ENCODE measurements at regions of chr4 and their contacts with region 1.

Region 1: DNA sequence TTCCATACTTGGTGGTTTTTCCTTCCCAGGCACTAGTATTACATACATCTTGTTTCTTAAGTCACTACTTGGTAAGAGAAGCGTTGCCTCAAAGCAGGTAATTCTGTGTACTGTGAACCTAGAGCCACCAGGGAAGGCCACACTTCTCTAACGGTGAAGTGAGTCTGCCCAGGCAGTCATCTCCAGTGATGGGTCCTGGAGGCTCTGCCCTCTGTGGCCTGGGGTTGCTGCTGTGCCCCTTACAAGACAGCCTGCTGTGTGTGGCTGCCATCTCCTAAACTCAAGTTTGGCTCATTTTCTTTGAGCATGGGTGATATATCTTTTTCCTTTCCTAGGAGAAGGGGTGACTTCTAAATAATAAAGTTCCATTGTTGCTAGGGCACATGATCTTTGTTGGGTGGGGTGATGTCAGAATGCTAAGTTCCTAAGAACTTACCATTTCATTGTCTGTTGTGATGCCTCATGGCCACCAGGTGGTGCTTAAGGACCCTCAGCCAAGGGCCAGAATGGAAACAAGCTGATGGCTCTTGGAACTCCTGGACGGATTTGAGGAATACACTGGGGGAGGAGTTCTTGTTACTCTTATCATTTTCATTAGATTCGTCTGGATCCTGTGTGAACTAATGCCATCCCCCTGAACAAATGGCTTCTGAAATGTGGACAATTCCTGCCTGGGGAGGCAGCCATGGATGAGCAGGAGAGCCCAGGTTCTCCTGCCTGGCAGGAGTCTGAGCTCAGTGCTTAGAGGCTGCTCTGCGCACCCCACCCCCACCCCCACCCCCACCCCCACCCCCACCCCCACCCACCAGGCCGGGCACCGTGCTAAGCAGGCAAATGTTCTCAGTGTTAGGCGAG is 41.1 kb upstream of the WDR1 start:
- DNase-seq: peak; percentile 74
- H3K4me3 ChIP-seq: no peak overlapping the region
- H3K27ac ChIP-seq: no peak overlapping the region
- H3K4me1 ChIP-seq: no peaks in the 10 kb centered on the region
- H3K27me3 ChIP-seq: peaks cover 2 to 7% of the 10 kb centered on the region in 2 experiments
- CTCF ChIP-seq: peak; percentile 79 to 82
- POLR2A ChIP-seq: no peak

Region 2: DNA sequence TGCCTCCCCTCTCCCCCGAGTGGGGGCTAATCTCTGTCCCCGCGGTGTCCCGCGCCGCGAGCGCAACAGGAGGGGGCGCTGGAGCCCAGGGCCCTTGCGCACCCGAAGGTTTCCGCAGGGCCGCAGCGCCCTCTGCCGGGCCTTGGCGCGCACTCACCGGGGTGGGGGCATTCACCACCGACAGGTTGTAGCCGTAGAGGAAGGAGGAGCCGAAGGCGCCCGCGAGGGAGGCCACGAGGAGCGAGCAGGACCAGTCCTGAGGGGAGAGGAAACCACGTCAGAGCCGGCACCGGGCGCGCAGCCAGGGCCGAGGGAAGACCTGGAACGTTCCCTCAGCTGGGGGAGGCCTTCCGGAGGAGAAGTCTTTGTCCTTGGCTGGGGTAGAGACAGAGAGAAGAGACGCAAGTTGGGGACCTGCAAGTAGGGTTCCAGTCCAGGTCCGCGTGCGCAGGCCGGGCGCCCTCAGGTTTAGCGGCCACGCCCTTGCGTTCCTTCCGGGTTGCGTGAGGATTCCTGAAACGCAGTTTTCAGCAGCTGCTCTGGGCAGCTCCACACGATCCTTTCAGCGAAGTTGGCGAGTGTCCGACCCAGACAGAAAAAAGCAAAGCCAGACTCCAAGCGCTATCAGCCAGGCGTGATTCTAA is 138.8 kb before region 1 on chr4:
- CTCF ChIA-PET with region 1: no interaction called
- POLR2A ChIA-PET with region 1: no interaction called
- dilution Hi-C with region 1: no loop called
- intact Hi-C with region 1: loop called (anchors 5 kb)
- DNase-seq: peak; percentile 95
- H3K4me3 ChIP-seq: peak overlapping the region in 2 of 3 experiments; percentile 25 to 27
- H3K27ac ChIP-seq: peak overlapping the region; percentile 50
- H3K4me1 ChIP-seq: peaks cover 6% of the 10 kb centered on the region
- H3K27me3 ChIP-seq: no peaks in the 10 kb centered on the region
- CTCF ChIP-seq: peak; percentile 100
- POLR2A ChIP-seq: peak; percentile 75

Region 3: DNA sequence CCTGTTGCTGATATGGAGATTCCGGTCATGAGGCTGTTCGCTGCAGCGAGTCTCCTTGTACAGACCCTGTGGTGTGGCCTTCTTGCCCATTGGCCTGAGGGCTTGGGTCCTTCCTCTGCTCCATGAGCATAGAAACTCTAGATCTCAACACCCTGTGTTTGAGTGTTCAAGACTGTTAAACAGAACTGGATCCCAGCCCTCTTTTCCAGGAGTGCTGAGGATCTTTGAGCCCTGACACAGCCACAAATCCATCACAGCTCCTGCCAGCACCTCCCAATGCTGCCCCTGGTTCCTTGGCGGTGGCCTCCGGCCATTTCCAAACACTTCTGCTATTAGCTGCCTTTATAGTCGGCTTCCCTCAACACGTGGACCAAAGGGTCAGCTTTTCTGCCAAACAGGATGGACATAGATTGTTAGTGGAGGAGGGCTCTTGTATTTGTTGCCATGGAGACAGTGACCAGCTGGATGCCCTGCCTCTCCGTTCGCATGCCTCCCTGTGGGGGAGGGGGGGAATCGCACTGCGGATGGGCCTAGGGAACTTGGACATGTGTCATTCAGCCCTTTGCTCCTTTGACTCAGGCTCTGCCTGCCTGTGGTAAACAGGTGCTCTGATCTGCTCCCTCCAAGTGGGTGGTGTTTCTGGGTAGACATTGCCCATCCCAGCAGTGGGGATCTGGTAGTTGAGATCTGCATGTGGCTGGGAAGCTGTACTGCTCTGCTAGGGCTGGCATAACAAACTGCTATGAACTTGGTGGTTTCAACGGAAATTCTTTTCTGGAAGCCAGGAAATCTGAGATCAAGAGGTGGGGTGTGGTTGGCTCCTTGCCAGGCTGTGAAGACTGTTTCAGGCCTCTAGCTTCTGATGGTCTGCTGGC is 34.2 kb before region 1 on chr4:
- CTCF ChIA-PET with region 1: interaction called, 13 read pairs
- POLR2A ChIA-PET with region 1: interaction called, 17 read pairs
- dilution Hi-C with region 1: no loop called
- intact Hi-C with region 1: loop called (anchors 5 kb)
- DNase-seq: peak; percentile 94
- H3K4me3 ChIP-seq: no peak overlapping the region
- H3K27ac ChIP-seq: peak overlapping the region; percentile 66
- H3K4me1 ChIP-seq: peaks cover 22% of the 10 kb centered on the region
- H3K27me3 ChIP-seq: no peaks in the 10 kb centered on the region
- CTCF ChIP-seq: no peak
- POLR2A ChIP-seq: no peak

Region 4: GRCh38 chr4:10173037-10173753 is 15.5 kb after region 1 on chr4:
- CTCF ChIA-PET with region 1: interaction called, 33 read pairs
- POLR2A ChIA-PET with region 1: no interaction called
- dilution Hi-C with region 1: no loop called
- intact Hi-C with region 1: no loop called
- DNase-seq: peak; percentile 70
- H3K4me3 ChIP-seq: no peak overlapping the region
- H3K27ac ChIP-seq: peak overlapping the region; percentile 6
- H3K4me1 ChIP-seq: peaks cover 15% of the 10 kb centered on the region
- H3K27me3 ChIP-seq: no peaks in the 10 kb centered on the region
- CTCF ChIP-seq: peak in 1 of 2 donors; percentile 28
- POLR2A ChIP-seq: no peak

Region 5: DNA sequence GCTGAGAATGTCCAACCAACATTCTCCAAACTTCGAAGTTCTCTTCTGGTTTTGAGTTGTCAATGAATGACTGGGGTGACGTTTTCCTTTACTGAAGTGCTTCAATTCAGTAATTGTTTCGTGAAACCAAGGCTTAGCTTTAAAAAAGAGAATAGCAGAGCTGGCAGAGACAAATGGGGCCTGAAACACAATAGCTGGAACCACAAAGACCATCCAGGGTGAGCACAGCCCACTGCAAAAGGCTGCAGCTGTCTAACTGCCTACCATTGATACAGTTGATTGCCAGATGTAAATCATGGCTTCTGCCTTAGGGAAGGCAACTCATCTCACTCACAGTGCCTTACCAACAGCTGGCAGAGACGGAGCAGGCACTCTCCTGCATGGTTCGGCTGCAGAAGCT is 378.2 kb after region 1 on chr4:
- CTCF ChIA-PET with region 1: interaction called, 88 read pairs
- POLR2A ChIA-PET with region 1: no interaction called
- dilution Hi-C with region 1: loop called (anchors 25 kb)
- intact Hi-C with region 1: loop called (anchors 1 kb)
- DNase-seq: no peak
- H3K4me3 ChIP-seq: no peak overlapping the region
- H3K27ac ChIP-seq: no peak overlapping the region
- H3K4me1 ChIP-seq: peaks cover 3% of the 10 kb centered on the region
- H3K27me3 ChIP-seq: peaks cover 0 to 2% of the 10 kb centered on the region in 2 experiments
- CTCF ChIP-seq: no peak
- POLR2A ChIP-seq: no peak

Region 6: GRCh38 chr4:10977534-10977933 is 819.8 kb after region 1 on chr4:
- CTCF ChIA-PET with region 1: no interaction called
- POLR2A ChIA-PET with region 1: no interaction called
- dilution Hi-C with region 1: no loop called
- intact Hi-C with region 1: no loop called
- DNase-seq: no peak
- H3K4me3 ChIP-seq: no peak overlapping the region
- H3K27ac ChIP-seq: no peak overlapping the region
- H3K4me1 ChIP-seq: no peaks in the 10 kb centered on the region
- H3K27me3 ChIP-seq: no peaks in the 10 kb centered on the region
- CTCF ChIP-seq: no peak
- POLR2A ChIP-seq: no peak

Measured in endothelial cell of umbilical vein (primary cell).